ENCODE measurements at regions of chr14 and their contacts with region 1.

Region 1: DNA sequence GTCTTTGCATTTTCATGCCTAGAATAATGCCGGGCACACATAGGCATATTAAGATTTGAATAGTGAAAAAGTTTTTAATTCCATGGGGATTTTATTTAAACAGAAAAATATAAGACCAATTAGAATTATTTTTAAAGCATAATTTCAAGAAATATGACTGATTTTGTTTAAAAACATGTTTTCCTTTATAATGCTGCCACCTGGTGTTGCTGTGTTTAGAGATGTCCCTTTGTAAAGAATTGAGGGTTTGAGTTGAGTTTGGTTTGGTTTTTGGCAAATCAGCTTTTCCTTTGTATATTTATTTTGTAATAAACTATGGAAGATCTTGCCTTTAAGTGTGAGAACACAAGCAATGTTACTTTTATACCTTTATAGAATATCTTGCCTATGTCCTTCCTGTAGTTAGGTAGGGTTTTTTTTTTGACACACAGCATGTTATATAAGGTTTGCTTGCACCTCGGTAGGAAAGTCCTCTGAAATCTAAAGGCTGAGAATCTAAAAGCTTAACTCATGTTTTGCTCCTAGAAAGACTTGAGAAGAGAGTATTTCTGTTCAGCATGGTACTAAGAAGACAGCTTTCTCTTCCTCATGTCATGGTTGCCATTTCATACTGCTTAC is 31.4 kb upstream of the SNAPC1 start:
- DNase-seq: no peak
- ATAC-seq: peak in 3 of 8 donors; percentile 21 to 39 (median 29)
- H3K4me3 ChIP-seq: no peak overlapping the region
- H3K27ac ChIP-seq: peak overlapping the region in 4 of 10 donors; percentile 37 to 48 (median 40)
- H3K4me1 ChIP-seq: peaks cover 0 to 31% (median 9%) of the 10 kb centered on the region in 9 donors
- H3K27me3 ChIP-seq: no peaks in the 10 kb centered on the region
- CTCF ChIP-seq: peak in 8 of 9 donors; percentile 17 to 73 (median 60)

Region 2: GRCh38 chr14:61461808-61462275 is 269.0 kb before region 1 on chr14:
- intact Hi-C with region 1: loop called in 8 of 10 experiments (anchors 2 to 5 kb)
- DNase-seq: peak in 1 of 2 donors; percentile 65
- ATAC-seq: peak; percentile 12 to 67 (median 54)
- H3K4me3 ChIP-seq: no peak overlapping the region
- H3K27ac ChIP-seq: peak overlapping the region in 7 of 10 donors; percentile 38 to 74 (median 53)
- H3K4me1 ChIP-seq: peaks cover 0 to 43% (median 35%) of the 10 kb centered on the region in 9 donors
- H3K27me3 ChIP-seq: no peaks in the 10 kb centered on the region
- CTCF ChIP-seq: peak; percentile 72 to 85 (median 82)

Measured in heart right ventricle (tissue), 16 donors.